Activated T-helper 2 cell treated with anti-CD3 and anti-CD28 coated beads, Interferon-gamma antibody, Interleukin-2, Interleukin-4, amounts not matched to agents 10 μg/mL and 5 μg/mL and 100 μg/mL, durations not matched to agents 14 hours and 24 hours and 36 hours (primary cell): ENCODE measurements at regions of chr20 and their contacts with region 1.

Region 1: GRCh38 chr20:41617931-41618806 is at the start of gene CHD6:
- DNase-seq: peak; percentile 99
- H3K4me3 Mint-ChIP-seq: peak within 1 kb of the TSS; percentile 89
- H3K27ac Mint-ChIP-seq: peak within 1 kb of the TSS; percentile 80
- H3K4me1 Mint-ChIP-seq: peaks cover 35% of the 10 kb centered on the region
- H3K27me3 Mint-ChIP-seq: peaks cover 15% of the 10 kb centered on the region
- total RNA-seq, gene CHD6: 32.5 and 32.7 TPM in 2 replicates

Region 2: DNA sequence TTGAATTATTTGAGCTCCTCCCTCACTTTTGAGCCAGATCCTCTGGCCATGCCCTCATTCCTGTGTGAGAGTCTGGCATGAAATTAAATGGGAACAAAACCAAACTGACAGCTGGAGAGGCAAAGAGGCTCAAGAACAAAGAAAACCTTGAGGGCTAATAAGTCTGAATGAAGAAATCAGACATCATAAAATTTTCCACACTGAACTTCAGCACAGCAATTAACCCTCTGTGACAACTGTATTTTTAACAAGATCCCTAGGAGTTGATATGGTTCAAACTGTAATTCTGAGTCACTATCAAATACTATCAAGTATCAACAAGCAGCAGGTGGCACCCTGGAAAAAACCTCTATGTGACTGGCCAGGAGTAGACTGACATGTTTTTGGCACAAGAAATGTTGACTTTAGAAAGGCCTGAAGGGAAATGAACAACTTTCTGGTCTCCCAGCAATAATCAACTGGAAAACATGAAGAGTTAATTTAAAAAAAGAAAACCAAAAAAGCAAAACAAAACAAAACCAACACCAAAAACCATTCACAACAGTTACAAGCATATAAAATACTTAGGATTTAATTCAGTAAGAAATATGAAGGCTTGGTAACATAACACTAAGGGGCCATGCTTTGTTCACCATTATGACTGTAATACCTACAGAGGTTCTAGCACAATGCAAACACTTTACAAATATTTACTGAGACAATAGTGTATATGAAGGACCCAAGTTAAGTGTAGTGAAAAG is 142.0 kb before region 1 on chr20:
- intact Hi-C with region 1: loop called (anchors 5 kb)
- DNase-seq: no peak
- H3K4me3 Mint-ChIP-seq: no peak overlapping the region
- H3K27ac Mint-ChIP-seq: no peak overlapping the region
- H3K4me1 Mint-ChIP-seq: peaks cover 30% of the 10 kb centered on the region
- H3K27me3 Mint-ChIP-seq: no peaks in the 10 kb centered on the region

Region 3: DNA sequence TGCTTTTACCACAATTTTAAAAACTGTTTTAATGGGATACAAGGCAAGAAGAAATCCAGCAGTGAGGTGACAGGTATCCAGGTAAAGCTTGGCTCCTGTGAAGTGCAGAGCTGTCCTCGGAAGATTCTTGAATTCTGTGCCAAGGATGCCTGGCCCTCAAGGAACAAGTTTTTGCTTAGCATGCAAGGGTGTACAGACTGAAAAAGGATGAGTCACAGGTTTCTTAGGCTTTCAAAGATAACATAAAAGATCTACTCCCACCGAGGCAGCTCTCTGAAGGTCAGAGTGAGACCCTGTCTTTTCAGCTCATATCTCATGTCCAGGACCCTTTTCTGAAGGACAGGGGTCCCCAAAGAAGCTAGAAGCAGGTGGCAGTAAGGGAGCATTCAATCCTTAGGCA is 83.3 kb before region 1 on chr20:
- intact Hi-C with region 1: no loop called
- DNase-seq: no peak
- H3K4me3 Mint-ChIP-seq: no peak overlapping the region
- H3K27ac Mint-ChIP-seq: no peak overlapping the region
- H3K4me1 Mint-ChIP-seq: peaks cover 2% of the 10 kb centered on the region
- H3K27me3 Mint-ChIP-seq: no peaks in the 10 kb centered on the region

Region 4: DNA sequence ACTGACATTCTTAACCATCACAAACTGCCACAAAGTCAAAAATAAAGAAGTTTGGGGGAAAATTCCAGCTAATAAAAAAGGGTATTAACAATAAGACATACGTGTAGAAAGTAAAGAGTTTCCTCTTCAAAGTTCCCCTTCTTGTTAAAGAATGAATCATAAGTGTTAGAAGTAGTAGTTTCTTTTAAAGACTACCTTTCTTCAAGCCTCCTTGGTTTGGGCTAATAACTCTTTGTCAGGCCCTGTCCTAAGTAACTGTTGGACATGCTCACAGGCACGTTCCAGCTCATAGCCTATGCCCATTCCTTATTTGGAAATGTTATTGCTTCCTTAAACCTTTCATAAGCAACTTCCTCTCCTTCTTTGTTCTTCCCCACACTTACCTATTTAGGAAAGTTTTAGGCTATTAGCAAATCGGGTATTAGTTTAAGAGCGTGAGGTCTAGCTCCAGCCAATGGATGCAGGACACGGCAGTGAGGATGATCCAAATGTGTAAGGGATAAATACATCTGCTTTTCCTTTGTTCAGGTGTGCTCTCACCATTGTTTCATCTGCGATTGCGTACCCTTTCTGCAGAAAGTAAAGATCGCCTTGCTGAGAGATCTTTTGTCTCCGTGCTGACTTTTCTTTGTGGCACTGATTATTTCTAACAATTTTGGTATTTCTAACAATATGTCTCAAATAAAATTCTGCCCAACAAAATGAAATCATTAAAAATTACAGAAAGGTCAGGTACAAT is 64.9 kb before region 1 on chr20:
- intact Hi-C with region 1: no loop called
- DNase-seq: no peak
- H3K4me3 Mint-ChIP-seq: no peak overlapping the region
- H3K27ac Mint-ChIP-seq: no peak overlapping the region
- H3K4me1 Mint-ChIP-seq: peaks cover 4% of the 10 kb centered on the region
- H3K27me3 Mint-ChIP-seq: no peaks in the 10 kb centered on the region

Region 5: DNA sequence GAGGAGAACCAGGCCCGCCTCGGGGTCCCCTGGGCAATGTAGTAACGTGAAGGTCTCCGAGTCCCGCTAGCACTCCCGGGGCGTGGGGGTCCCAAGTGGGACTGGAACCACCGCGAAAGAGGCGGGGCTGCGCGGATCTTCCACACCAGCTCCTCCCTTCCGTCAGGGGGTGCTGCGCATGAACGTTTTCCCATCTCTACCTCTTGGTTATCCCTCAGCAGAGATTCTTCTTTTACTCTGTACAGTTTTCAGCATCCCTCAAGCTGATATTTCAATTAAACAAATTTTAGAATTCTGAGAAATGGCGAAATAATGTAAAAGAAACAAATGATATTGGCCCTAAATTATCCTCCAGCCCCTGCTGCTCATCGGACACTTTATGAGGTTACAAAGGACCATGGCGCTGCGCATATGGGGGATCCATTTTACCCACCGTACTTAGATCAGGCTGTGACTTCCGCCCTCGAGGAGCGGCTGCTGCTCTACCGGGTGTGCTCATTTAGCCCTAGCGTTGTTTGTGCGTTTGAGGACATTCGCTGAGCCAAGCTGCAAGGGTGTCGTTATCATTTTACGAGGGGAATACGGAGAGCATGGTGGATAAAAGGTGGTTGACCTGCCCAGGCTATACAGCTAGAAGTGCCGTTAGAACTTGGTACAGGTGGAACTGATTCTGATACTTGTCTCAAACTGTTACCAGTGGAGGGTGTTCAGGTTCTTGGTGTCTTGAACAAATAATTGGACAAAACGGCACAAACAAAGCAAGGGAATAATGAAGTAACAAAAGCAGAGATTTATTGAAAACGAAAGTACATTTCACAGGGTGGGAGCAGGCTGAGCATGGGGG is 75.2 kb after region 1 on chr20:
- intact Hi-C with region 1: loop called (anchors 1 kb)
- DNase-seq: peak; percentile 73
- H3K4me3 Mint-ChIP-seq: peak overlapping the region; percentile 98
- H3K27ac Mint-ChIP-seq: peak overlapping the region; percentile 96
- H3K4me1 Mint-ChIP-seq: peaks cover 18% of the 10 kb centered on the region
- H3K27me3 Mint-ChIP-seq: peaks cover 5% of the 10 kb centered on the region